Mammary epithelial cell (primary cell): ENCODE measurements at regions of chr1 and their contacts with region 1.

Region 1: GRCh38 chr1:227999056-227999930 is 7.5 kb upstream of the WNT3A start:
- DNase-seq: peak; percentile 68
- H3K4me3 ChIP-seq: no peak overlapping the region
- H3K27ac ChIP-seq: no peak overlapping the region
- H3K4me1 ChIP-seq: no peaks in the 10 kb centered on the region
- H3K27me3 ChIP-seq: no peaks in the 10 kb centered on the region
- CTCF ChIP-seq: peak; percentile 97 to 98

Region 2: GRCh38 chr1:227482023-227482299 is 517.3 kb before region 1 on chr1:
- CTCF ChIA-PET with region 1: no interaction called
- dilution Hi-C with region 1: no loop called
- in situ Hi-C with region 1: no loop called
- intact Hi-C with region 1: loop called (anchors 5 kb)
- DNase-seq: no peak
- H3K4me3 ChIP-seq: no peak overlapping the region
- H3K27ac ChIP-seq: no peak overlapping the region
- H3K4me1 ChIP-seq: no peaks in the 10 kb centered on the region
- H3K27me3 ChIP-seq: peaks cover 6% of the 10 kb centered on the region
- CTCF ChIP-seq: no peak

Region 3: DNA sequence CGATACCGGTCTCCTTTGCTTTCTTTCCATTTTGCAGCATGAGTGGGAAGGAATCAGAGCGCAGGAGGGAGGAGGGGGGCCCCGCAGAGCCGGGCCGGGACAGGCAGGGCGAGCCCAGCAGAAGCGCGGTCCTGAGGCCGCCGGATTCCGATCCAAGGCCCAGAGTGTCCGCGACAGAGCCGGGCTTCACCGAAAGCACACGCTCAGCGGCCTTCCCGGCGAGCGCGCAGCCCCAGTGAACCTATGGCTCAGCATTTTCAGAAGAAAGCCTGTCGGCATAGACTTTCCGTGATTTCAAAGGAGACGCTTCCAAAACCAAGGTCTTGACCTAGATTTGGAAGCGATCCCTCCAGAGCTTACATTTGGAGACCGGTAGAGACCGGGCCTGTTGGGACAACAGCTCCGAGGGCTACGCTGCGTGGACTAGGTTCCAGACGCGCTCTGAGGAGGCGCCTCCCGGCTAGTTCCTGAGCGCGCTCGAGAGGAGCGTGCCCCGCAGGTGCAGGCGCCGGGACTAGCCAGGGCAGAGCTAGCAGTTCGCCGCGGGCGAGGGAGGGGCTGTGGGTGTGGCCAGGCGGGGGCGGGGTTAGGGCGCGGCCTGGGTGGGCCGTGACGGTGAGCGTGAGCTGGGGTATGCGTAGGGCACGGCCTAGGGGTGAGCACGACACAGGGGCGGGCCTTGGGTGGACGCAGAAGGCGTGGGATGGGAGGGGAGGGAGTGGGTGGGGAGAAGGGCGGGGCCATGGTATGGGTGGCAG is 211.6 kb before region 1 on chr1:
- CTCF ChIA-PET with region 1: no interaction called
- dilution Hi-C with region 1: no loop called
- in situ Hi-C with region 1: no loop called
- intact Hi-C with region 1: no loop called
- DNase-seq: peak; percentile 96
- H3K4me3 ChIP-seq: peak overlapping the region; percentile 46 to 84 (median 69)
- H3K27ac ChIP-seq: peak overlapping the region; percentile 50
- H3K4me1 ChIP-seq: peaks cover 22% of the 10 kb centered on the region
- H3K27me3 ChIP-seq: no peaks in the 10 kb centered on the region
- CTCF ChIP-seq: no peak

Region 4: GRCh38 chr1:228021362-228021961 is 22.2 kb after region 1 on chr1:
- CTCF ChIA-PET with region 1: no interaction called
- dilution Hi-C with region 1: no loop called
- in situ Hi-C with region 1: no loop called
- intact Hi-C with region 1: no loop called
- DNase-seq: no peak
- H3K4me3 ChIP-seq: no peak overlapping the region
- H3K27ac ChIP-seq: no peak overlapping the region
- H3K4me1 ChIP-seq: no peaks in the 10 kb centered on the region
- H3K27me3 ChIP-seq: peaks cover 4% of the 10 kb centered on the region
- CTCF ChIP-seq: no peak

Region 5: DNA sequence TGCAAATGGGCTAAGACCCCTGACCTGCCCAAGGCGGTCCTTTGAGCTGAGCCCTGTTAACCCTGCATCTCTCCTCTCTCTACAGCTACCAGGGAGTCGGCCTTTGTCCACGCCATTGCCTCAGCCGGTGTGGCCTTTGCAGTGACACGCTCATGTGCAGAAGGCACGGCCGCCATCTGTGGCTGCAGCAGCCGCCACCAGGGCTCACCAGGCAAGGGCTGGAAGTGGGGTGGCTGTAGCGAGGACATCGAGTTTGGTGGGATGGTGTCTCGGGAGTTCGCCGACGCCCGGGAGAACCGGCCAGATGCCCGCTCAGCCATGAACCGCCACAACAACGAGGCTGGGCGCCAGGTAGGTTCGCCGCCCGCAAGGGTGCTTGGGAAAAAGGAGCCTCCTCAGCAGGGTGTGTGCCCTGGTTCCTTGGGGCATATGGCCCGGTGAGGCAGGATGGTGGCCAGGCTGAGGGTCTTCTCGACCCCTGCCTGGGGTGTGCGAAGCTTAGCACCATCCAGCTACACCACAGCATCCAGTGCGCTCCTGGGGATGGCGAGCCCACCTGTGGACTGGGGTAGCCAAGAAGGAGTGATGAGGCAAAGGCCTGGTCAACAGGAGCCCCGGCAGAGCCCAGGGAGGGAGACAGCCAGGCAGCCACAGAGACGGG is 51.4 kb after region 1 on chr1:
- CTCF ChIA-PET with region 1: no interaction called
- dilution Hi-C with region 1: no loop called
- in situ Hi-C with region 1: no loop called
- intact Hi-C with region 1: no loop called
- DNase-seq: no peak
- H3K4me3 ChIP-seq: no peak overlapping the region
- H3K27ac ChIP-seq: no peak overlapping the region
- H3K4me1 ChIP-seq: no peaks in the 10 kb centered on the region
- H3K27me3 ChIP-seq: peaks cover 12% of the 10 kb centered on the region
- CTCF ChIP-seq: no peak

Region 6: GRCh38 chr1:228073857-228074545 is 74.7 kb after region 1 on chr1:
- CTCF ChIA-PET with region 1: interaction called, 20 read pairs
- dilution Hi-C with region 1: no loop called
- in situ Hi-C with region 1: no loop called
- intact Hi-C with region 1: loop called (anchors 1 kb)
- DNase-seq: no peak
- H3K4me3 ChIP-seq: no peak overlapping the region
- H3K27ac ChIP-seq: no peak overlapping the region
- H3K4me1 ChIP-seq: no peaks in the 10 kb centered on the region
- H3K27me3 ChIP-seq: no peaks in the 10 kb centered on the region
- CTCF ChIP-seq: peak; percentile 19 to 47

Region 7: DNA sequence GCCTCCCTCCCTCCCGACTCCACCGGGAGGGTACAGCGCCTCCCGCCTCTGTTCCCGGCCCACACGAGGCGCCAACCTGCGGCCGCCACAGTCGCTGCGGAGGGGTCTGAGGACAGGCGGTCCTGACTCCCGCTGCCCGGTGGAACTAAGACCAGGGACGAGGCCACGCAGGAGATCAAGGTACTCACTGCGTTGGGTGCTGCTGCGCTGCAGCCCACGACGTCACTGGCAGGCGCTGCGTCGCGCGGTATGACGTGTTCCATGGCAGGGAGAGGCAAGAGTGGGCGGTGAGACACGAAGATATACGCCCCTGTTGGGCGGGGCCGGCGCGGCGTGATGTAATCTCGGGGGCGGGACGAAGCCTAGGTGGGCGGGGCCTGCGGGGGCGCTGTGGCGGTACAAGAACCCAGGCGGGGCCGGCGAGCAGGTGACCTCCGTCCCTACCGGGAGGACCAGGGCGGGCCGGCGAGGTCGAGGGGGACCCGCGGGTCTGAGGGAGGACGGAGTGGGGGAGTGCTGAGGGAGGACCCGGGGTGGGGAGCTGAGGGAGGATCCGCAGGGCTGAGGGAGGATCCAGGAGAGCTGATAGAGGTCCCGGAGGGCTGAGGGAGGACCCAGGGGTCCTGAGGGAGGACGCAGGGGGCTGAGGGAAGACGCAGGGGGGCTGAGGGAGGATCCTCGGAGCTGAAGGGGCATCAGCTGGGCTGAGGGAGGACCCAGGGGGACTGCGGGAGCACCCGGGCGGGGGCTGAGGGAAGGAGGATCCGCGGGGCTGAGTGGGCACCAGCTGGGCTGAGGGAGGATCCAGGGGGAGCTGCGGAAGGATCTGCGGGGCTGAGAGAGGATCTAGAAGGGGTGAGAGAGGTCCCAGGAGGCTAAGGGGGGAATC is 110.0 kb after region 1 on chr1 and contains the start of gene MRPL55:
- CTCF ChIA-PET with region 1: no interaction called
- dilution Hi-C with region 1: loop called (anchors 5 kb)
- in situ Hi-C with region 1: no loop called
- intact Hi-C with region 1: no loop called
- DNase-seq: peak; percentile 95
- H3K4me3 ChIP-seq: peak within 1 kb of the TSS; percentile 73 to 99 (median 80)
- H3K27ac ChIP-seq: peak within 1 kb of the TSS; percentile 66
- H3K4me1 ChIP-seq: peaks cover 14% of the 10 kb centered on the region
- H3K27me3 ChIP-seq: no peaks in the 10 kb centered on the region
- CTCF ChIP-seq: peak in 1 of 2 donors; percentile 10
- total RNA-seq, gene MRPL55: 37.7 to 42.3 TPM

Region 8: GRCh38 chr1:228393248-228393699 is 394.0 kb after region 1 on chr1:
- CTCF ChIA-PET with region 1: interaction called, 6 read pairs
- dilution Hi-C with region 1: no loop called
- in situ Hi-C with region 1: no loop called
- intact Hi-C with region 1: loop called (anchors 5 kb)
- DNase-seq: no peak
- H3K4me3 ChIP-seq: no peak overlapping the region
- H3K27ac ChIP-seq: no peak overlapping the region
- H3K4me1 ChIP-seq: no peaks in the 10 kb centered on the region
- H3K27me3 ChIP-seq: no peaks in the 10 kb centered on the region
- CTCF ChIP-seq: peak; percentile 39 to 72

Region 9: GRCh38 chr1:228457396-228458176 is 458.3 kb after region 1 on chr1:
- CTCF ChIA-PET with region 1: no interaction called
- dilution Hi-C with region 1: no loop called
- in situ Hi-C with region 1: no loop called
- intact Hi-C with region 1: loop called (anchors 1 kb)
- DNase-seq: peak; percentile 98
- H3K4me3 ChIP-seq: peak overlapping the region; percentile 69 to 78 (median 76)
- H3K27ac ChIP-seq: peak overlapping the region; percentile 59
- H3K4me1 ChIP-seq: peaks cover 30% of the 10 kb centered on the region
- H3K27me3 ChIP-seq: no peaks in the 10 kb centered on the region
- CTCF ChIP-seq: peak in 1 of 2 donors; percentile 48